Pancreas (tissue), 10 donors: ENCODE measurements at regions of chr16 and their contacts with region 1.

Region 1: DNA sequence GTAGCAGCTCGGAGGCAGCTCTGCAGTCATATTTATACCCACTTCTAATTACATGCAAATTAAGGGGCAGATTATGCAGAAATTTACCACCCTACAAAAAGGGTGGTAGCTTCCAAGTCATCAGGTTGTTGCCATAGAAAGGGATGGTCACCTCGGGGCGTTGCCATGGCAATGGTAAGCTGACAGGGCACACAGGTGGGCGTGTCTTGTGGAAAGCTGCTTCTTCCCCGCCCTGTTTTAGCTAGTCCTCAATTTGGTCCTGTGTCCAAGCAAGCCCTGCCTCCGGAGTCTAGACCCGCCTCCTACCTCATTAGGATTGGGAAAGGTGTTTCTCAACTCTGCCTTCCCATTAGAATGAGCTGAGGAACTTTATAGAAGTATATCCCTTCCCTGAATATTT is 98.7 kb downstream of the HS3ST2 start:
- DNase-seq: no peak
- ATAC-seq: no peak
- H3K4me3 ChIP-seq: no peak overlapping the region
- H3K27ac ChIP-seq: no peak overlapping the region
- H3K4me1 ChIP-seq: no peaks in the 10 kb centered on the region
- H3K27me3 ChIP-seq: no peaks in the 10 kb centered on the region
- CTCF ChIP-seq: no peak

Region 2: DNA sequence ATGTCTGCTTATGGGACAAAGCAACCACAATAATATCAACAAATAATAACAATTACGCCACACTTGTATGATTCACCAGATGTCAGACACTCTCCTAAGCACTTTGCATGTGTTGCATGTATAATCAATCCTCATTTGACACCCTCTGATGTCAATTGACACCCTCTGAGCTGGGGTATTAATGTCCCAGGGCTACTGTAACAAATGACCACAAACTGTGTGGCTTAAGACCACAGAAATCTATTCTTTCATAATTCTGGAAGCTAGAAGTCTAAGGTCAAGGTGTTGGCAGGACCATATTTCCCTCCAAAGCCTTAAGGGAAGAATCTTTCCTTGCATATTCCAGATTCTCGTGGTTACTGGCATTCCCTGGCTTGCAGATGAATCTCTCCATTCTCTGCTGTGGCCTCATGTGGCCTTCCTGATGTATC is 289.3 kb before region 1 on chr16:
- intact Hi-C with region 1: no loop called
- DNase-seq: no peak
- ATAC-seq: no peak
- H3K4me3 ChIP-seq: no peak overlapping the region
- H3K27ac ChIP-seq: no peak overlapping the region
- H3K4me1 ChIP-seq: peaks cover 0 to 12% (median 4%) of the 10 kb centered on the region in 3 donors
- H3K27me3 ChIP-seq: no peaks in the 10 kb centered on the region
- CTCF ChIP-seq: no peak

Region 3: GRCh38 chr16:22857296-22858025 is 55.2 kb before region 1 on chr16:
- intact Hi-C with region 1: loop called in 1 of 3 experiments (anchors 10 kb)
- DNase-seq: no peak
- ATAC-seq: no peak
- H3K4me3 ChIP-seq: no peak overlapping the region
- H3K27ac ChIP-seq: no peak overlapping the region
- H3K4me1 ChIP-seq: no peaks in the 10 kb centered on the region
- H3K27me3 ChIP-seq: no peaks in the 10 kb centered on the region
- CTCF ChIP-seq: no peak

Region 4: GRCh38 chr16:22989598-22989997 is 76.9 kb after region 1 on chr16:
- intact Hi-C with region 1: no loop called
- DNase-seq: no peak
- ATAC-seq: no peak
- H3K4me3 ChIP-seq: no peak overlapping the region
- H3K27ac ChIP-seq: no peak overlapping the region
- H3K4me1 ChIP-seq: no peaks in the 10 kb centered on the region
- H3K27me3 ChIP-seq: peaks cover 0 to 3% (median 0%) of the 10 kb centered on the region in 4 donors
- CTCF ChIP-seq: no peak